PC-9 (cell line): ENCODE measurements at regions of chr2 and their contacts with region 1.

Region 1: DNA sequence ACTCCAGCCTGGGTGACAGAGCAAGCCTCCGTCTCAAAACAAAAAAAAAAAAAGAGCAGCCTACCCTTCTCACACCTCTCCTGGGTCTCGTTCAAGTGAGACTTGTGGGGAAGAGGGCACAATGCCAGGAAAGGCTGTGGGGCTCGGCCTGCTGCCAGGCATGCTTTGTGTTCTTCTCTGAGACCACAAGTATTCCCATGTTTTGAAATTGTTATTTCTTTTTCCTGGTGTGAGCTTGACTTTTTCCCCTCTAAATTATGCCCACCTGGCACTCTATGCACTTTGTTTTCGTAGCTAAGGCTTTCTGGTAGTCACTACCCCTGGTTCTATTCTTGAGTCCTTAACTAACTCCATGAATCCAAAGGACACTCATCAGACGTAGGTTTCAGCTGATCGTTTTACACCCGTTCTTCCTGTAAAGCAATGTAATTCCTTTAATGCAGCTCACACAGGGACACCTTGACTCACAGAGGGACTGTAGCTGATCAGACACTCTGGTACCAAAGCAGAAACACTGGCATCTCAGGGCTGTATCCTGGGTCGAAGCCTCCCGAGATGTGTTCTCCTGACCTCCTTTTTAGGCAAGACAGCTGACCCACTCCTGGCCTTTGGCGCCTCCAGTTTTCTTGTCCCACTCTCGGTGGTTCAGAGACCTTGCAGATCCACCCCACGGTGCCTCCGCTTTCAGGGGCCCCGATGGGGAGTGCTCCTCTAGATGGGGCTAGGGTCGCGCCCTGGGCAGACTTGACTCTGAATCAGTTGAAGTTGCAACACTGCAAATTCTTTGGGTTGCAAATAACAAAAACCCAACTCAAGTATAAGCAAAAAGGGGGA is 193.3 kb upstream of the AGAP1 start:
- DNase-seq: peak; percentile 64 to 89
- H3K4me3 ChIP-seq: no peak overlapping the region
- H3K27ac ChIP-seq: no peak overlapping the region
- H3K4me1 ChIP-seq: peaks cover 9% of the 10 kb centered on the region
- H3K27me3 ChIP-seq: no peaks in the 10 kb centered on the region
- CTCF ChIP-seq: no peak

Region 2: GRCh38 chr2:234620018-234620417 is 680.6 kb before region 1 on chr2:
- CTCF ChIA-PET with region 1: no interaction called
- POLR2A ChIA-PET with region 1: no interaction called
- intact Hi-C with region 1: no loop called
- DNase-seq: no peak
- H3K4me3 ChIP-seq: no peak overlapping the region
- H3K27ac ChIP-seq: no peak overlapping the region
- H3K4me1 ChIP-seq: no peaks in the 10 kb centered on the region
- H3K27me3 ChIP-seq: no peaks in the 10 kb centered on the region
- CTCF ChIP-seq: no peak

Region 3: GRCh38 chr2:235191978-235192377 is 108.6 kb before region 1 on chr2:
- CTCF ChIA-PET with region 1: no interaction called
- POLR2A ChIA-PET with region 1: interaction called, 12 read pairs
- intact Hi-C with region 1: no loop called
- DNase-seq: no peak
- H3K4me3 ChIP-seq: no peak overlapping the region
- H3K27ac ChIP-seq: no peak overlapping the region
- H3K4me1 ChIP-seq: no peaks in the 10 kb centered on the region
- H3K27me3 ChIP-seq: no peaks in the 10 kb centered on the region
- CTCF ChIP-seq: no peak